ENCODE measurements at regions of chr12 and their contacts with region 1.

Region 1: GRCh38 chr12:94262228-94263010 is 114.0 kb downstream of the PLXNC1 start:
- DNase-seq: peak; percentile 78 to 87
- ATAC-seq: peak; percentile 87 to 93 (median 88)
- H3K4me3 ChIP-seq: peak overlapping the region; percentile 69
- H3K4me3 Mint-ChIP-seq: peak overlapping the region; percentile 92
- H3K27ac ChIP-seq: peak overlapping the region; percentile 96
- H3K27ac Mint-ChIP-seq: peak overlapping the region; percentile 96 to 97
- H3K4me1 ChIP-seq: peaks cover 37% of the 10 kb centered on the region
- H3K4me1 Mint-ChIP-seq: peaks cover 33 to 44% of the 10 kb centered on the region in 2 donors
- H3K27me3 ChIP-seq: no peaks in the 10 kb centered on the region
- H3K27me3 Mint-ChIP-seq: no peaks in the 10 kb centered on the region
- CTCF ChIP-seq: no peak

Region 2: GRCh38 chr12:93825931-93826555 is 436.4 kb before region 1 on chr12:
- intact Hi-C with region 1: no loop called
- DNase-seq: no peak
- ATAC-seq: no peak
- H3K4me3 ChIP-seq: no peak overlapping the region
- H3K4me3 Mint-ChIP-seq: no peak overlapping the region
- H3K27ac ChIP-seq: no peak overlapping the region
- H3K27ac Mint-ChIP-seq: no peak overlapping the region
- H3K4me1 ChIP-seq: no peaks in the 10 kb centered on the region
- H3K4me1 Mint-ChIP-seq: peaks cover 0 to 5% of the 10 kb centered on the region in 2 donors
- H3K27me3 ChIP-seq: no peaks in the 10 kb centered on the region
- H3K27me3 Mint-ChIP-seq: no peaks in the 10 kb centered on the region
- CTCF ChIP-seq: no peak

Region 3: DNA sequence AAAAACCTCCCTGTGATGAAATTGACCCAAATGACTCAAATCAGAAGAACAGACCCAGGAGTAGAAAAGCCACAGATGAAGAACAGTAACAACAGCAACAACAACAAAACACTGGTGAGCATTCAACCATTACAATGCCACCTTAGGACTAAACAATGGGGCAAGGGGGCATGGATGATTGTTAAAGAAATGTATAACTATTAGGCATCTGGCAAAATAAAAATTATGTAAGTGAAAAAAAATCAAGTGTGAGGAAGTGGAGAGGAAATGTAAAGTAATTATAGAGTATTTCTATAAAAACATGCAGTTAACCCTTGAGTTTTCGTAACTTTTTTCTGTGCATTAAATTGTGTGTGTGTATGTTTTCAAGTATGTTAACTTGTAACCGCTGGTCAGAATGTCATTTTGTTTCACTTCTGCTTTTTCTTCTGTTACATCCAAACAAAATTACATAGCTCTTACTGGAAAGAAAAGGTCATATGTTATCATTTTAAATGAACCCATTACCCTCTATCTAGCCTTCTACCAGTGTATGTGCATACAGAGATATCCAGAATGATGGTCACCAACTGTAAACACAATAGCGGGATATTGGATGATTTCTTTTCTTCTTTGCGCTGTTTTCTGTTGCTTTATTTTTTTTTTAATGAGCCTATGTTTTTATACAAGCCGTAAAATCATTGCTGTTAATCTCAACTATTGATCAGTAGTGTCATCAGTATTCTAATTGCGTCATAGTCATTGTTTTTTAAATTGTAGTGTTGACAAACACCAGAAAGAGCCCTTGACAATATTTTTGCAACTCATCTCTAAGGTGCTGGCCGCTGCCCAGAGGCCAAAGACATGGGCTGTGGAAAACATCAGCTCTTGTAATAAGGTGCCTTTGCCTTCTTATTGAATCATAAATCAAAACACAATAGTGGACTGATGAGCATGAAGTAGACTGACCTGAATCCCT is 414.6 kb before region 1 on chr12:
- intact Hi-C with region 1: no loop called
- DNase-seq: no peak
- ATAC-seq: no peak
- H3K4me3 ChIP-seq: no peak overlapping the region
- H3K4me3 Mint-ChIP-seq: no peak overlapping the region
- H3K27ac ChIP-seq: no peak overlapping the region
- H3K27ac Mint-ChIP-seq: peak overlapping the region; percentile 30 to 60
- H3K4me1 ChIP-seq: peaks cover 28% of the 10 kb centered on the region
- H3K4me1 Mint-ChIP-seq: peaks cover 41 to 49% of the 10 kb centered on the region in 2 donors
- H3K27me3 ChIP-seq: no peaks in the 10 kb centered on the region
- H3K27me3 Mint-ChIP-seq: peaks cover 0 to 3% of the 10 kb centered on the region in 2 donors
- CTCF ChIP-seq: no peak

Region 4: DNA sequence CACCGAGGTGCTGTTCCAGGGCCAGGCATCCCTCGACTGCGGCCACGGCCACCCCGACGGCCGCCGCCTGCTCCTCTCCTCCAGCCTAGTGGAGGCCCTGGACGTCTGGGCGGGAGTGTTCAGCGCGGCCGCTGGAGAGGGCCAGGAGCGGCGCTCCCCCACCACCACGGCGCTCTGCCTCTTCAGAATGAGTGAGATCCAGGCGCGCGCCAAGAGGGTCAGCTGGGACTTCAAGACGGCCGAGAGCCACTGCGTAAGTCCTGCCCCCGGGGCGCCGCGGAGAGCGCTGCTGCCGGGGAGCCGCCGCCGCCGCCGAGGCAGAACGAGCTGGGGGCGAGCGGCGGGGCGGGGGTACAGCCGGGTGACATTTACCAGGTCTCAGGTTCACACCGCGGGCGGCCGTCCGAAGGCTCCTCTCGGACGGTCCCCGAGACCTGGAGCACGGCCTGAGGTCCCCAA is 112.6 kb before region 1 on chr12:
- intact Hi-C with region 1: loop called (anchors 10 kb)
- DNase-seq: no peak
- ATAC-seq: peak; percentile 5 to 9 (median 6)
- H3K4me3 ChIP-seq: peak overlapping the region; percentile 42
- H3K4me3 Mint-ChIP-seq: peak overlapping the region; percentile 94
- H3K27ac ChIP-seq: no peak overlapping the region
- H3K27ac Mint-ChIP-seq: peak overlapping the region; percentile 53 to 79
- H3K4me1 ChIP-seq: peaks cover 22% of the 10 kb centered on the region
- H3K4me1 Mint-ChIP-seq: peaks cover 23 to 44% of the 10 kb centered on the region in 2 donors
- H3K27me3 ChIP-seq: no peaks in the 10 kb centered on the region
- H3K27me3 Mint-ChIP-seq: no peaks in the 10 kb centered on the region
- CTCF ChIP-seq: no peak

Region 5: GRCh38 chr12:94180558-94181296 is 81.7 kb before region 1 on chr12:
- intact Hi-C with region 1: loop called (anchors 2 kb)
- DNase-seq: peak; percentile 54 to 56
- ATAC-seq: peak; percentile 78 to 86 (median 82)
- H3K4me3 ChIP-seq: no peak overlapping the region
- H3K4me3 Mint-ChIP-seq: peak overlapping the region; percentile 82
- H3K27ac ChIP-seq: peak overlapping the region; percentile 58
- H3K27ac Mint-ChIP-seq: peak overlapping the region; percentile 71 to 92
- H3K4me1 ChIP-seq: peaks cover 25% of the 10 kb centered on the region
- H3K4me1 Mint-ChIP-seq: peaks cover 27 to 46% of the 10 kb centered on the region in 2 donors
- H3K27me3 ChIP-seq: no peaks in the 10 kb centered on the region
- H3K27me3 Mint-ChIP-seq: no peaks in the 10 kb centered on the region
- CTCF ChIP-seq: no peak

Region 6: DNA sequence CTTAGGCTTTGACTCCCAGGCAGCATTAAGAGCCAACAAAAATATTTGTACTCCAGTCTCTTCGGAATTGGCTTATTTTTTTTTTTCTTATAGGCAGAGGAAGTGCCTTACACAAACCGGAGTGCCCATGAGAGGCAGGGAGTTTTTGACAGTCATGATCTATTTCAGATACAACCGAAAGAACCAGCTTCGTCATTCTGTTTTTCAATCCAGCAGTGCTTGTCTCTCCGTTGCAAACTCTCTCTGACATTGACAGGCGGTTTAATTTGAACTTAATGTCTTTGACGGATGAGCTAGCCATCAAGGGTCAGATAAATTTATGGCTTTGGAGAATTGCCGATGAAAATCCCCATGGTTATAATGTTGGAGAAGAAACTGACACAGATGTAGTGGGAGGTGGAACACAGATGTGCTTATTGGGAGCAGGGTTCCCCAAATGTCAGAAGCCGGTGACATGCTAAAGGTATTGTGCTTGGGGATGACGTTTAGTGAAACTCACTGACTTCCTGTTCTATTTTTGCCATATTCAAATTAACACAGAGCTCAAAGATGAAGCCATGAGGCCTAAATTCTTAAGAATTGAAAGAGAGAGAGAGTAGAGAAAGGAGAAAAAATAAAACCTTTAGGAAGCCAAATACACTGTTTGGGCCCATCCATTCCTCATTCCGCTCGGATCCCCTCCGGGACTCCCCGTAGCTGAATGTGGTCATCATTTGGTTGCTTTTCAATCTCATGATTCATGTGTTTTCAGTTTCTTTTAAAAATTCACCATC is 54.4 kb before region 1 on chr12:
- intact Hi-C with region 1: loop called (anchors 10 kb)
- DNase-seq: peak; percentile 22 to 72
- ATAC-seq: peak; percentile 81 to 84 (median 83)
- H3K4me3 ChIP-seq: peak overlapping the region; percentile 38
- H3K4me3 Mint-ChIP-seq: peak overlapping the region; percentile 88
- H3K27ac ChIP-seq: peak overlapping the region; percentile 94
- H3K27ac Mint-ChIP-seq: peak overlapping the region; percentile 92 to 98
- H3K4me1 ChIP-seq: peaks cover 29% of the 10 kb centered on the region
- H3K4me1 Mint-ChIP-seq: peaks cover 46 to 62% of the 10 kb centered on the region in 2 donors
- H3K27me3 ChIP-seq: no peaks in the 10 kb centered on the region
- H3K27me3 Mint-ChIP-seq: no peaks in the 10 kb centered on the region
- CTCF ChIP-seq: no peak

Region 7: DNA sequence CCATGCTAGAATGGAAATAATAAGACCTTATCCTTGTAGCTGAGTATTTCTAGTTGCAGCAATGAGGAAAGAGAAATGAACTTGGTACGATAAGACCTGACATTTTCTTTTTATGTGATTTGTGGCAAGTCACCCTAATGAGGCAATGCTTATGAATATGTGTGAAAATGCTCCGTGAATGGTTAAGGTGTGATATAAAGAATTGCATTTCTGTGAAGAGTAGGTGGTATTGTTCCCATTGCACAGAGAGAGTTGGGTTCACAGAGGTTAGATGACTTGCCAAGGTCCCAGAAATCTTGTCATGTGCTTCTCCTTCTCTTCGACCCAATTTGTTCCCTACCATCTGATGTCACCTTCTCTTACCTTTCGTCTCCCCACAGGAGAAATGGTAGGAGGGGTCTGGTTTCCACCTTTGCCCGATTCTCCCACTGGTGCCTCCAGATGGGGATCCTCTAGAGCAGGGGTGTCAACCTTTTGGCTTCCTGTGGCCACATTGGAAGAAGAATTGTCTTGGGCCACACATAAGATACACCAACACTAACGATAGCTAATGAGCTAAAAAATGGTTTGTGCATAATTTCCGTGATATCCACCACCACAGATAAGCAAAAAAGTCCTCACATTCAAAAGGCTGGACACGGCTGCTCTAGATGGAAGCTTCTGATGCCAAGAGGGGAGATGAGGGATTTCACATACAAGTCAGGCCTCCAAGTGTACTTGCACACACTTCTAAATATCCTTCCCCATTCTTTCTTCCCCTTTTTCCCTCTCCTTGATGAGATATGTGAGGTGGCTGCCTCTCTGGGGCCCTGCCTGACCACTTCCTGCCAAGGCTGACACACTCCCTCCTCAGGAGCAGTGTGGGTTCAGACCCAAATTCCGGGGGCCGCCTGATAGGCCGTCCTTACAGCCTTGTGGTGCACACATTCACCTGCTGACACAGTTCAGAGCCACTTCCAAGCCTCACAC is 18.0 kb before region 1 on chr12:
- intact Hi-C with region 1: loop called (anchors 1 kb)
- DNase-seq: peak; percentile 52 to 61
- ATAC-seq: peak; percentile 73 to 89 (median 81)
- H3K4me3 ChIP-seq: no peak overlapping the region
- H3K4me3 Mint-ChIP-seq: peak overlapping the region; percentile 78
- H3K27ac ChIP-seq: peak overlapping the region; percentile 85
- H3K27ac Mint-ChIP-seq: peak overlapping the region; percentile 90
- H3K4me1 ChIP-seq: peaks cover 39% of the 10 kb centered on the region
- H3K4me1 Mint-ChIP-seq: peaks cover 55 to 61% of the 10 kb centered on the region in 2 donors
- H3K27me3 ChIP-seq: no peaks in the 10 kb centered on the region
- H3K27me3 Mint-ChIP-seq: no peaks in the 10 kb centered on the region
- CTCF ChIP-seq: no peak

Region 8: GRCh38 chr12:94290353-94290752 is 27.9 kb after region 1 on chr12:
- intact Hi-C with region 1: no loop called
- DNase-seq: no peak
- ATAC-seq: no peak
- H3K4me3 ChIP-seq: no peak overlapping the region
- H3K4me3 Mint-ChIP-seq: no peak overlapping the region
- H3K27ac ChIP-seq: no peak overlapping the region
- H3K27ac Mint-ChIP-seq: no peak overlapping the region
- H3K4me1 ChIP-seq: no peaks in the 10 kb centered on the region
- H3K4me1 Mint-ChIP-seq: peaks cover 7 to 17% of the 10 kb centered on the region in 2 donors
- H3K27me3 ChIP-seq: no peaks in the 10 kb centered on the region
- H3K27me3 Mint-ChIP-seq: no peaks in the 10 kb centered on the region
- CTCF ChIP-seq: no peak

Region 9: GRCh38 chr12:94459728-94460615 is 197.6 kb after region 1 on chr12 and contains the start of gene CEP83:
- intact Hi-C with region 1: loop called (anchors 2 kb)
- DNase-seq: peak; percentile 96 to 98
- ATAC-seq: peak; percentile 96 to 99 (median 98)
- H3K4me3 ChIP-seq: peak within 1 kb of the TSS; percentile 85
- H3K4me3 Mint-ChIP-seq: peak within 1 kb of the TSS; percentile 94
- H3K27ac ChIP-seq: peak within 1 kb of the TSS; percentile 86
- H3K27ac Mint-ChIP-seq: peak within 1 kb of the TSS; percentile 90 to 95
- H3K4me1 ChIP-seq: peaks cover 6% of the 10 kb centered on the region
- H3K4me1 Mint-ChIP-seq: peaks cover 13 to 18% of the 10 kb centered on the region in 2 donors
- H3K27me3 ChIP-seq: no peaks in the 10 kb centered on the region
- H3K27me3 Mint-ChIP-seq: peaks cover 7 to 10% of the 10 kb centered on the region in 2 donors
- CTCF ChIP-seq: no peak
- total RNA-seq, gene CEP83: 13.3 to 19.3 (median 15.2) TPM